HEK293 (cell line): ENCODE measurements at regions of chr13 and their contacts with region 1.

Region 1: DNA sequence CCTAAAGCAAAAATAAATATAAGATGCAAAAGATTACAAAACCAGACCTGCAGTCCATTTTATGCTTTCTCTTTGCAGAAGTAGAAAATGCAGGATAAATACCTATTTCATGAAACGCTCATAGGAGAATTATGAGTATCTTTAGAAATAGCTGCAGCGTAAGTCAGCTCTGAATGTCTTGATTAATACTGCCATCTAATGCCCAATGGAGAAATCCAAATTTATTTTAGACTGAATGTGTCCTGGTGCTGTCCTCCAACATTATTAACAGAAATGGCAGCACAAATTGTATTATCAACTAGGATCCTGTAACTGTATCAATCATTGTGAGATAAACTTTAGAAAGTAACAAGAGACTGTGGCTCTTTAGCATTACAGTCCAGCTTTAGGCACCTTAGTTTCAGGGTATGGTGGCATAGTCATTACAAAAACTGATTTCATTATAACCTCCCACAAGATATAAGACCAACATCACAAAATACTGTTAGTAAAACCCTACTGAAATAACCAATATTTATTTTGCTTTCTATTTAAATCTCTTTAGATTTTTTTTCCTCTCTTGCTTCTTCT is 162.1 kb upstream of the MIR17HG start:
- H3K4me3 ChIP-seq: no peak overlapping the region
- H3K27ac ChIP-seq: no peak overlapping the region
- H3K4me1 ChIP-seq: no peaks in the 10 kb centered on the region
- CTCF ChIP-seq: no peak

Region 2: DNA sequence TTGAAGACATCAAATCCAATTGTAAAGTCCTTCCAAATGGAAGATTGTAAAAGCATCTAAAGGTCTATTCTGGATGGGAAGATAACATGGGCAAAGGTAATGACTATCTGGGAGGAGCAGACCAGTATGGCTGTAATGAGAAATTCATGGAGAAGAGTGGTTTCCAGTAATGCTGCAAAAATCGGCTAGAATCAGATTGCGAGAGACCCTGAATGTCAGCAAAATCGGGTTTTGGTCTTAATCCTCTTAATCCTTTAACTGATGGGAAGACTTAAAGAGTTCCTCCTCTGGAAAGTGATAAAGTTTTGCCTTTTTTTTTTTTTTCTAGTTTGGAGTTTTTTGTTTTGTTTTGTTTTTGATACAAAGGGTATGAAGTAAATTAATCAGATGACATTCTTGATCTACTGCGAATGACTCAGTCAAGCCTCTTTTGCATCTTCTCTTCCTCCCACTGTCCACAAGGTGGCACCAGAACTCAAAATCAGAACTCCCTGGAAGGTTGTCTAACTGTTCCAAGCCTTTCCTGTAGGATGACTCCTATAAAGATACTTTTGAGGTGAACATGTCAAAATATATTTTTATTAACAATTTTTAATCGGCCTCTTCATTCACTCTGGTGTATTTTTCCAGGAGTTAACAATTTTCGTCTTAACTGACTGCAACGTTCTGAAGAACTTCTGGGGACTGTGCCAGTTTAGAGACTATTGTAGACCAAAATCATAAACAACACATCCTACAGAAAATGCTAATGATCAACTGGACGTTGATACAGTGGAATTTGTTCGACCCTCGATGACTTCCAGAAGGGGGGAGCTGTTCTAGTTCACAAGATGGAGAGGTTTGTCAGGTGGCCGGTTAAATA is 51.2 kb before region 1 on chr13:
- CTCF ChIA-PET with region 1: interaction called, 26 read pairs
- POLR2A ChIA-PET with region 1: no interaction called
- H3K4me3 ChIP-seq: no peak overlapping the region
- H3K27ac ChIP-seq: no peak overlapping the region
- H3K4me1 ChIP-seq: no peaks in the 10 kb centered on the region
- CTCF ChIP-seq: 0 out of 2 replicates have a peak, but pooled peaks have one; percentile 9

Region 3: GRCh38 chr13:91154558-91155353 is 30.6 kb before region 1 on chr13:
- CTCF ChIA-PET with region 1: no interaction called
- POLR2A ChIA-PET with region 1: no interaction called
- H3K4me3 ChIP-seq: no peak overlapping the region
- H3K27ac ChIP-seq: no peak overlapping the region
- H3K4me1 ChIP-seq: no peaks in the 10 kb centered on the region
- CTCF ChIP-seq: no peak

Region 4: DNA sequence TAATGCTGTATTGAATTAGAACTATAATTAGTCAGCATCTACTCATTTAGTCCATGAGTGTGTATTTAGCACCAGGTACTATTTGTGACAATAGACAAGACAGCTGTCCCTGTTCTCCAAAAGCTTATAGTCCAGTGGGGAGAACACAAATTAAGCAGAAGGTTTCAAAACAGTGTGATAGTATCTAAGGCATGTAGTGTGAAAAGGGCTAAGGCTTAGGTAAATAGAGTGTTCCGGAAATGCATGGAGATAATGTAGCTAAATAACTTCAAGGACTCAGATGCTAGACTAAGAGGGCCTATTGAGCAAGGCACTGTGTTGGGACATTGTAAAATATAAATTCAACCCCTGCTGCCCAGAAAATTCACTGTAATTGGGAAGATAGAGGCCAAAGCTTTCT is 18.1 kb after region 1 on chr13:
- CTCF ChIA-PET with region 1: no interaction called
- POLR2A ChIA-PET with region 1: no interaction called
- H3K4me3 ChIP-seq: no peak overlapping the region
- H3K27ac ChIP-seq: no peak overlapping the region
- H3K4me1 ChIP-seq: no peaks in the 10 kb centered on the region
- CTCF ChIP-seq: no peak